Caco-2 (cell line): ENCODE measurements at regions of chr1 and their contacts with region 1.

Region 1: GRCh38 chr1:185317034-185317885 is at the start of gene IVNS1ABP:
- DNase-seq: peak; percentile 95 to 98
- H3K4me3 ChIP-seq: peak within 1 kb of the TSS; percentile 97
- H3K4me3 Mint-ChIP-seq: peak within 1 kb of the TSS; percentile 93
- H3K27ac Mint-ChIP-seq: peak within 1 kb of the TSS; percentile 98
- H3K4me1 ChIP-seq: peaks cover 21% of the 10 kb centered on the region; the same call in 1 of the 2 replicates
- H3K4me1 Mint-ChIP-seq: peaks cover 12% of the 10 kb centered on the region
- H3K27me3 ChIP-seq: no peaks in the 10 kb centered on the region
- H3K27me3 Mint-ChIP-seq: no peaks in the 10 kb centered on the region
- CTCF ChIP-seq: peak in 1 of 2 experiments; percentile 66
- total RNA-seq, gene IVNS1ABP: 72.4 and 74.5 TPM in 2 replicates

Region 2: GRCh38 chr1:185156854-185157598 is 160.2 kb before region 1 on chr1 and contains the starts of genes SWT1 and TRMT1L:
- CTCF ChIA-PET with region 1: no interaction called
- POLR2A ChIA-PET with region 1: interaction called, 10 read pairs
- intact Hi-C with region 1: loop called (anchors 2 kb)
- DNase-seq: peak; percentile 98
- H3K4me3 ChIP-seq: peak within 1 kb of the TSS; percentile 88
- H3K4me3 Mint-ChIP-seq: peak within 1 kb of the TSS; percentile 93
- H3K27ac Mint-ChIP-seq: peak within 1 kb of the TSS; percentile 87
- H3K4me1 ChIP-seq: peaks cover 11% of the 10 kb centered on the region; the same call in 1 of the 2 replicates
- H3K4me1 Mint-ChIP-seq: peaks cover 7% of the 10 kb centered on the region
- H3K27me3 ChIP-seq: no peaks in the 10 kb centered on the region
- H3K27me3 Mint-ChIP-seq: no peaks in the 10 kb centered on the region
- CTCF ChIP-seq: no peak
- total RNA-seq, gene SWT1: 2.7 and 2.9 TPM in 2 replicates
- total RNA-seq, gene TRMT1L: 14.2 and 23.8 TPM in 2 replicates

Region 3: GRCh38 chr1:185404291-185404690 is 87.0 kb after region 1 on chr1:
- CTCF ChIA-PET with region 1: no interaction called
- POLR2A ChIA-PET with region 1: no interaction called
- intact Hi-C with region 1: loop called (anchors 5 kb)
- DNase-seq: no peak
- H3K4me3 ChIP-seq: no peak overlapping the region
- H3K4me3 Mint-ChIP-seq: peak overlapping the region; percentile 48
- H3K27ac Mint-ChIP-seq: no peak overlapping the region
- H3K4me1 ChIP-seq: peaks cover 6% of the 10 kb centered on the region; the same call in 1 of the 2 replicates
- H3K4me1 Mint-ChIP-seq: peaks cover 27% of the 10 kb centered on the region
- H3K27me3 ChIP-seq: no peaks in the 10 kb centered on the region
- H3K27me3 Mint-ChIP-seq: no peaks in the 10 kb centered on the region
- CTCF ChIP-seq: no peak

Region 4: DNA sequence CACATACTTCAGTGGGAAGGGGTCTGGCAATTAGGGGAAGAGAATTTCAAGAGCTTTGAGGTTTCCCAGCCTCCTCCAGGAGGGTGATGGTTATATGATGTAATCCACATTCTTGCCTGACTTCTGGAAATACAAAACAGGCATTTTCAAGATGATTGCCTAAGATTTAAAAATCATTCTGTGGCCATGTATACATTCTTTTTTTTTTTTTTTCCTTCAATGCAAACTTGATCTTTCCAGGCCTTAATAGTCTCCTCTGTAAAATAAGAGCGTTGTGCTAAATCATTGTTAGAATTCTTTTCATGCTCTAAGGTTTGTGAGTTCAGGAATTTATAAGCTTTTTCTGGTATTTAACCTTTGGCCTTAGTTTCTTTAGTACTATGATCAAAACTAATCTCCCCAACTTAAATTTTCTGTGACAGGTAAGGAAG is 224.6 kb after region 1 on chr1:
- CTCF ChIA-PET with region 1: interaction called, 6 read pairs
- POLR2A ChIA-PET with region 1: interaction called, 5 read pairs
- intact Hi-C with region 1: loop called (anchors 1 kb)
- DNase-seq: peak in 1 of 2 experiments; percentile 40
- H3K4me3 ChIP-seq: no peak overlapping the region
- H3K4me3 Mint-ChIP-seq: peak overlapping the region; percentile 44
- H3K27ac Mint-ChIP-seq: peak overlapping the region; percentile 83
- H3K4me1 ChIP-seq: peaks cover 41% of the 10 kb centered on the region
- H3K4me1 Mint-ChIP-seq: peaks cover 39% of the 10 kb centered on the region
- H3K27me3 ChIP-seq: no peaks in the 10 kb centered on the region
- H3K27me3 Mint-ChIP-seq: no peaks in the 10 kb centered on the region
- CTCF ChIP-seq: no peak

Region 5: DNA sequence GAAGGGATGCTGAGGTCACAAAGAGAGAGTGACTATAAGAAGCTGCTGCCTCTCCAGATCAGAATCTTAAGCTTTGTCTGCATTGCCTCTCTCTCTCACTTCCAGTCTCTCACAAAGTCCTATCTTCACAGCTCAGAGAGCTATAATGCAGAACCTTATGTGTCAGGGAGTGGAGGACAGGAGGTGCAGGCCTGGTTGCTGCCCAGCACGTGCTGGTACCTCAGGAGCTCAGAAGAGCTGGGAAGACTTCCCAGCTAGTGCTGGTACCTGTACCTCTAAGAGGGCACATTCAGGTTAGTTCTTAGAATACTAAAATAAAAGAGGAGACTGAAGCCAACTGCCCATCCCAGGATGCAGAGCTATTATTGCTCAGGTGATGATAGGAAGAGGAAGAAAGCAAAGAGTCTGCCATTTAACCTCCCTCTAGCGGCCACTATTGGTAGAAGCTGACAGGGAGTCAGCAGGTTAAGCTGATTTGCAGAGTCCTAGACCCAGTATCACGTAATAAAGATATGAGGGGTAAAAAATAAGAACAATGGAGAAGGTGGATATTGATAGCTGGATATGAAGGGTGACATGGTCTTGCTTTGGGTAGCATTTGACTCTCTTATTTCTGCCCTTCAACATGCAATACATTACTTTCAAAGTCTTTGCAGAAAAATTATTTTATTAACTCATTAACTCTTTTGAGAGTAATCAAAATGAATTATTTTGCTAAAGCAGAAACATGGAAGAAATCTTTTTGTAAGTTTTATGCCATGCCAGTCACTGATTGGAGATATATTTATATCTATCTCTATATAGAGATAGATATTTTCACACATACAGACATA is 278.8 kb after region 1 on chr1:
- CTCF ChIA-PET with region 1: interaction called, 15 read pairs
- POLR2A ChIA-PET with region 1: no interaction called
- intact Hi-C with region 1: loop called (anchors 2 kb)
- DNase-seq: peak; percentile 50 to 58
- H3K4me3 ChIP-seq: no peak overlapping the region
- H3K4me3 Mint-ChIP-seq: no peak overlapping the region
- H3K27ac Mint-ChIP-seq: no peak overlapping the region
- H3K4me1 ChIP-seq: peaks cover 13% of the 10 kb centered on the region
- H3K4me1 Mint-ChIP-seq: peaks cover 18% of the 10 kb centered on the region
- H3K27me3 ChIP-seq: no peaks in the 10 kb centered on the region
- H3K27me3 Mint-ChIP-seq: no peaks in the 10 kb centered on the region
- CTCF ChIP-seq: peak; percentile 46 to 56

Region 6: GRCh38 chr1:185670187-185670627 is 352.9 kb after region 1 on chr1:
- CTCF ChIA-PET with region 1: interaction called, 16 read pairs
- POLR2A ChIA-PET with region 1: interaction called, 4 read pairs
- intact Hi-C with region 1: no loop called
- DNase-seq: peak in 1 of 2 experiments; percentile 52
- H3K4me3 ChIP-seq: no peak overlapping the region
- H3K4me3 Mint-ChIP-seq: no peak overlapping the region
- H3K27ac Mint-ChIP-seq: no peak overlapping the region
- H3K4me1 ChIP-seq: peaks cover 12% of the 10 kb centered on the region; the same call in 1 of the 2 replicates
- H3K4me1 Mint-ChIP-seq: peaks cover 7% of the 10 kb centered on the region
- H3K27me3 ChIP-seq: no peaks in the 10 kb centered on the region
- H3K27me3 Mint-ChIP-seq: no peaks in the 10 kb centered on the region
- CTCF ChIP-seq: peak; percentile 41 to 52